T-cell (primary cell): ENCODE measurements at regions of chr7 and their contacts with region 1.

Region 1: DNA sequence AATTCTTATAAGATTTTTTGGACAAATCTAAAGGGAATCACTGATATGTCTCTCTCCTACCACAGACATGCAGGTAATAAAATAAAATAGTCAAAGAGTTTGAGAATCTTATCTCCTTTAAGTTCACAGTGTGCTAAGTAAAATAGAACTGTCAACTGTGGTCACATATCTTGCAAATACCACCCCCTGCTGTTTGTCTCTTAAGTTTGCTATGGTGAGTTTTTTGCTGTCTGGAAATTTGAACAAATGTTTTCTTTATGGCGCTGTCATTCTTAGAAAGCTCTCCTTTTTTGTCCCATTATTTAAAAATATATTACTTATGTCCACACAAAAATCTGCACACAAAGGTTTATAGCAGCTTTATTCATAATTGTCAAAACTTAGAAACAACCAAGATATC is 19.6 kb downstream of the GIMAP5 start:
- DNase-seq: peak in 4 of 35 experiments; percentile 41 to 82 (median 44)
- ATAC-seq: peak in 3 of 4 experiments; percentile 28 to 53 (median 28)
- H3K4me3 ChIP-seq: no peak overlapping the region
- H3K4me3 Mint-ChIP-seq: peak overlapping the region; percentile 63 to 79 (median 68)
- H3K27ac ChIP-seq: peak overlapping the region; percentile 77
- H3K27ac Mint-ChIP-seq: peak overlapping the region; percentile 98 to 99
- H3K4me1 ChIP-seq: peaks cover 32 to 43% of the 10 kb centered on the region in 2 experiments
- H3K4me1 Mint-ChIP-seq: peaks cover 48 to 53% (median 49%) of the 10 kb centered on the region in 3 donors
- H3K27me3 ChIP-seq: no peaks in the 10 kb centered on the region
- H3K27me3 Mint-ChIP-seq: no peaks in the 10 kb centered on the region

Region 2: GRCh38 chr7:150388709-150389531 is 367.9 kb before region 1 on chr7:
- CTCF ChIA-PET with region 1: no interaction called
- POLR2A ChIA-PET with region 1: no interaction called
- DNase-seq: no peak
- ATAC-seq: no peak
- H3K4me3 ChIP-seq: no peak overlapping the region
- H3K4me3 Mint-ChIP-seq: no peak overlapping the region
- H3K27ac ChIP-seq: no peak overlapping the region
- H3K27ac Mint-ChIP-seq: no peak overlapping the region
- H3K4me1 ChIP-seq: no peaks in the 10 kb centered on the region
- H3K4me1 Mint-ChIP-seq: peaks cover 0 to 6% (median 0%) of the 10 kb centered on the region in 3 donors
- H3K27me3 ChIP-seq: no peaks in the 10 kb centered on the region
- H3K27me3 Mint-ChIP-seq: no peaks in the 10 kb centered on the region

Region 3: GRCh38 chr7:150685219-150686029 is 71.4 kb before region 1 on chr7 and contains the start of gene GIMAP2:
- CTCF ChIA-PET with region 1: interaction called in 1 of 2 experiments, 11 read pairs
- POLR2A ChIA-PET with region 1: interaction called in 1 of 2 experiments, 3 read pairs
- DNase-seq: peak in 9 of 35 experiments; percentile 15 to 76 (median 29)
- ATAC-seq: peak; percentile 73 to 88 (median 76)
- H3K4me3 ChIP-seq: peak within 1 kb of the TSS; percentile 71 to 75
- H3K4me3 Mint-ChIP-seq: peak within 1 kb of the TSS; percentile 94 to 99 (median 95)
- H3K27ac ChIP-seq: peak within 1 kb of the TSS; percentile 92
- H3K27ac Mint-ChIP-seq: peak within 1 kb of the TSS; percentile 100
- H3K4me1 ChIP-seq: peaks cover 32 to 50% of the 10 kb centered on the region in 2 experiments
- H3K4me1 Mint-ChIP-seq: peaks cover 81 to 87% (median 84%) of the 10 kb centered on the region in 3 donors
- H3K27me3 ChIP-seq: no peaks in the 10 kb centered on the region
- H3K27me3 Mint-ChIP-seq: no peaks in the 10 kb centered on the region
- total RNA-seq, gene GIMAP2: 83.2 to 226 (median 183) TPM

Region 4: DNA sequence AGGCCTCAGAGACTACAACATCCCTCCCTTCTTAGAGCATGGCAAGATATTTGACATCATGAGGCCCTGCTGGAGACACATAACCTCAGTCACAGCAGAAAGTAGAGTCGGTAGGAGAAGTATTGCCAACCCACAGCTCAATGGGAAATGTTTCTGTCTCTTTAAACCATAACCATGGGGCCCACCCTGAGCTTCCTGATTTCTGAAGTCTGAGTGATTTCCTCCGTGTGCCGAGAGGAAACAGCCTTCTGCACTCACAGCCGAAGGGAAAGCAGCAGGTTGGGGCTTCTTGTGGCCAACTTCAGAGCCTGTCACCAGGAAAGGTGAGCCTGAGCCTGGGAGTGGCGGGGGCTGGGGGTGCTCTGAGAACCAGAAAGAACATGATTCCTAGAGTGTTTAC is 40.5 kb before region 1 on chr7 and contains the start of gene GIMAP1:
- CTCF ChIA-PET with region 1: interaction called in 1 of 2 experiments, 10 read pairs
- POLR2A ChIA-PET with region 1: interaction called in 1 of 2 experiments, 3 read pairs
- DNase-seq: peak; percentile 40 to 80 (median 63)
- ATAC-seq: peak; percentile 85 to 93 (median 90)
- H3K4me3 ChIP-seq: peak within 1 kb of the TSS; percentile 80 to 93
- H3K4me3 Mint-ChIP-seq: peak within 1 kb of the TSS; percentile 88 to 99 (median 99)
- H3K27ac ChIP-seq: peak within 1 kb of the TSS; percentile 79
- H3K27ac Mint-ChIP-seq: peak within 1 kb of the TSS; percentile 94 to 97
- H3K4me1 ChIP-seq: peaks cover 38 to 51% of the 10 kb centered on the region in 2 experiments
- H3K4me1 Mint-ChIP-seq: peaks cover 66 to 79% (median 74%) of the 10 kb centered on the region in 3 donors
- H3K27me3 ChIP-seq: no peaks in the 10 kb centered on the region
- H3K27me3 Mint-ChIP-seq: no peaks in the 10 kb centered on the region
- total RNA-seq, gene GIMAP1: 23.5 to 99.9 (median 76.8) TPM

Region 5: GRCh38 chr7:151769188-151769841 is 1012.5 kb after region 1 on chr7:
- CTCF ChIA-PET with region 1: no interaction called
- POLR2A ChIA-PET with region 1: no interaction called
- DNase-seq: peak in 33 of 35 experiments; percentile 7 to 78 (median 41)
- ATAC-seq: peak; percentile 91 to 93 (median 92)
- H3K4me3 ChIP-seq: peak overlapping the region in 1 of 2 donors; percentile 28
- H3K4me3 Mint-ChIP-seq: peak overlapping the region; percentile 56 to 67 (median 65)
- H3K27ac ChIP-seq: peak overlapping the region; percentile 75
- H3K27ac Mint-ChIP-seq: peak overlapping the region; percentile 95 to 98
- H3K4me1 ChIP-seq: peaks cover 21 to 52% of the 10 kb centered on the region in 2 experiments
- H3K4me1 Mint-ChIP-seq: peaks cover 56 to 66% (median 62%) of the 10 kb centered on the region in 3 donors
- H3K27me3 ChIP-seq: no peaks in the 10 kb centered on the region
- H3K27me3 Mint-ChIP-seq: no peaks in the 10 kb centered on the region